Activated T-helper 1 cell treated with anti-CD3 and anti-CD28 coated beads, Interleukin-12 subunit alpha, Interleukin-12 subunit beta, Interleukin-2, Interleukin-4 antibody, amounts not matched to agents 30 ng/mL and 10 ng/mL and 1 ng/mL, durations not matched to agents 14 hours and 24 hours and 36 hours (primary cell): ENCODE measurements at regions of chr2 and their contacts with region 1.

Region 1: DNA sequence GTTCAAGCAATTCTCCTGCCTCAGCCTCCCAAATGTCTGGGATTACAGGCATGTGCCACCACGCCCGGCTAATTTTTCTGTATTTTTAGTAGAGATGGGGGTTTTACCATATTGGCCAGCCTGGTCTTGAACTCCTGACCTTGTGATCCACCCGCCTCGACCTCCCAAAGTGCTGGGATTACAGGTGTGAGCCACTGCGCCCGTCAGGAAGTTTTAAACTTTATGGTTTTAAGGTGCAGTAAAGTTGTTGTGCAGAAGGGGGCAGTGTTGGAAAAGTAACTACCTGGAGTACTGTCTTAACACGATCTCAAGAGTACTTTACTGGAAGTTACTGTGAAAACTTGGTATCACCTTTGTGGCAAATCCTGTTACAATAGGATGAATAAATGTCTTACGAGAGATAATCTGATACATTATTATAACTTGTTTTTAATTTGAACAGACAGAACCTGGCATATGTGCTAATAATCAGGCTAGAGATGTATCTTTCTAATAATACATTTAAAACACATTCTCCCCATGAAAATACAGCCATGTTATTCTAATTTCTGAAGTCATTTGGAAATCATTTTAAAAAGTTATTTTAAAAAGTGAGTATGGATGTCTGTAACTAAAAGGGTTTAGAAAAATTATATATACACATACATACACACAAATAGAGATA is 10.8 kb downstream of the SPDYA start:
- DNase-seq: peak; percentile 52
- H3K4me3 Mint-ChIP-seq: no peak overlapping the region
- H3K27ac Mint-ChIP-seq: no peak overlapping the region
- H3K4me1 Mint-ChIP-seq: no peaks in the 10 kb centered on the region
- H3K27me3 Mint-ChIP-seq: peaks cover 2% of the 10 kb centered on the region

Region 2: DNA sequence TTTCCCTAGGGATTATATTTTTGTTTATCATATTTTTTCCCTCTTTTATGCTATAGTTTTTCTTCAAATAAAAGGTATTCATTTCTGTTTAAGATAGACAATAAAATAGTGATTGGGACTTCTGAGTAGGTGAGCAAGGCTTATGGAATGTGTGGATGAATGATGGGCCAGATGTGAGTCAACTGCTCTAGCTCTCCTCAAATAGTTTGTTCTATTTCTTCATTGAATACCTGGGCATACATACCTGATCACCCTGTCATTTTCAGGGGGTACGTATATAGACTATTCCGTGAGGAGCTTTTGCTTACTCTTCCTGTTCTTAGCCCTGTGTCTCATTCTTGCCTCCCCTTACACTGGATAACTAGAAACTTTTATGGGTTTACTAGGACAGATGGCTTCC is 889.0 kb before region 1 on chr2:
- intact Hi-C with region 1: no loop called
- DNase-seq: no peak
- H3K4me3 Mint-ChIP-seq: no peak overlapping the region
- H3K27ac Mint-ChIP-seq: no peak overlapping the region
- H3K4me1 Mint-ChIP-seq: peaks cover 12% of the 10 kb centered on the region
- H3K27me3 Mint-ChIP-seq: no peaks in the 10 kb centered on the region

Region 3: DNA sequence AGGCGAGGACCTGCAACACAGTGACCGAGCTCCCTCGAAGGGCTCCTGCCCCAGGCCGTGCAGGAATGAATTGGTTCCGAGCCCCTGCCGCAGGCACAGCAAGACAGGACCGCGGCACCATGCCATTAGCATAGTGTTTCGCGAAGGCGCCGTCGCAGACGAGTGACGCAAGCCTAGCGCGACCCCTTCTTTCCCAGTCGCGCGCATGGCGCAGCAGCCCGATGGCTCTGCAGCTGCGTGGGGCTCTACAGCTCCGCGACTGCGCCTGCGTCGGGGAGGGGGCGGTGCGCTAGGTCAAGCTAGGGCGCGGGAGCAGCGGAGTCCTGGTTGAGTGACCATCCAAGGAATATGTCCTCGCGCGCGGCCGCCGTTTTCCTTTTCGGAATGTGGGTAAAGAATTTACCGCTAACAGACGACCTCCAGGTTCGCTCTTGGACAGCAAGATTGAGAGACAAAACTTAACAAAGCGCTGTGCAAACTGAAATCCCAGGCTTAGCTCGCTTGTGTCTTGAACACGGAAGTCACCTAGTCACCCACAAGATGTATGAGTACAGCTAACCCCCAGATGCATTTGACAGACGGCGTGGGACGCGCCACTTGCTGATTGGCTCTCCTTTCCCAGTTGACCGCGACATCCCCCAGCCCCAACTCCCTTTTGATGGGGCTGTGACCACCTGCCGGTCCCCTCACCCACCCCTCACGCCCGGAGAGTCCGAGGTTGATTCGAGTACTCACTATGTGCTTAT is 48.9 kb after region 1 on chr2 and contains the start of gene TRMT61B:
- intact Hi-C with region 1: loop called (anchors 1 kb)
- DNase-seq: peak; percentile 97
- H3K4me3 Mint-ChIP-seq: peak within 1 kb of the TSS; percentile 97
- H3K27ac Mint-ChIP-seq: peak within 1 kb of the TSS; percentile 93
- H3K4me1 Mint-ChIP-seq: peaks cover 23% of the 10 kb centered on the region
- H3K27me3 Mint-ChIP-seq: peaks cover 6% of the 10 kb centered on the region
- total RNA-seq, gene TRMT61B: 18.4 and 21.4 TPM in 2 replicates

Region 4: DNA sequence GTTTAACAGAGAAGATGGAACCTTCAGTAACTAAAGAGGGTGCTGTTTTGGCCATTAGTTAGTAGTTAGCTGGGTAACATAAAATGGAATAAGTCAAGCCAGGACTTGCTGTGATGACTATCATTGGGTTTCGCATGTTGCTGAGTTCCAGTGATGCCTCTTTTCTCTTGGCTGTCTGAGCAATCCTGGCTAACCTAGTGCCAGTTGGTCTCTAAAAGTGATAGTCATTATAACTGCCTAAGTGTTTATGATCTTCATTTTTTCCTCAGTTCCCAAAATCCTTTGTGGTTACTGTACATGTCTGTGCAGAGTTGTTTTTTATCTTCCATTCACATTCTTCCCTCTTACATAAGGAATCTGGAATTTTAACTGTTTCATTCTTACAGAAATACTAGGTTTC is 106.5 kb after region 1 on chr2:
- intact Hi-C with region 1: loop called (anchors 10 kb)
- DNase-seq: no peak
- H3K4me3 Mint-ChIP-seq: no peak overlapping the region
- H3K27ac Mint-ChIP-seq: no peak overlapping the region
- H3K4me1 Mint-ChIP-seq: peaks cover 17% of the 10 kb centered on the region
- H3K27me3 Mint-ChIP-seq: no peaks in the 10 kb centered on the region

Region 5: DNA sequence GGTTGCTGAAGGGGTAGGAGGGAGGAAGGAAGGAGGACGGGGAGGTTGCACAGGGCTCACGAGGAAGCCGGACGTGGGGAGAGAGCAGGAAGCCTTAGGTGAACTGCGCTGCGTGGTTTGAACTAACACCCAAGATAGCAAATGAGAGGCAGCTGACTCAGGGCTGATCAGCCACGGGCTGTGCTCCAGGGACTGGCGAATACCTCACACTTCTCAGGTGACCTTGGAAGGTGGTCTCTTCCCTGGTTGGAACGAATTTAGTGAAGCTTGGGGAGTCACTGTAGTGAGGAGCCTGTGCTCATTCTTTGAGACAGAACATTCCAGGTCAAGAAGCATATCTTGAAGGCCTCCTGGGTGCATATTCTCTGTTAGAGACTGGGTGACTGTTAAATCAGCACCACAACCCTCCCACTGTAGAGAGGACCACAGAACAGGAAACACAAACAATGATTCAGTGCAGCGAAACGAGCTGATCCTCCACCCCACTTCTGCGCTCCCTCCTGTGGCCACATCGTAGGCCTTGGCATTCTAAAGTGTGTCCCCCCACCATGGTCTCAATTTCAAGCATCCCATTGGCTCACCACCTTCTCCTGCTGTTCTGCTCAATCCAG is 193.5 kb after region 1 on chr2:
- intact Hi-C with region 1: loop called (anchors 5 kb)
- DNase-seq: peak; percentile 65
- H3K4me3 Mint-ChIP-seq: peak overlapping the region; percentile 88
- H3K27ac Mint-ChIP-seq: peak overlapping the region; percentile 99
- H3K4me1 Mint-ChIP-seq: peaks cover 65% of the 10 kb centered on the region
- H3K27me3 Mint-ChIP-seq: peaks cover 2% of the 10 kb centered on the region

Region 6: GRCh38 chr2:29309090-29310029 is 487.9 kb after region 1 on chr2:
- intact Hi-C with region 1: loop called (anchors 10 kb)
- DNase-seq: peak; percentile 41
- H3K4me3 Mint-ChIP-seq: no peak overlapping the region
- H3K27ac Mint-ChIP-seq: no peak overlapping the region
- H3K4me1 Mint-ChIP-seq: peaks cover 27% of the 10 kb centered on the region
- H3K27me3 Mint-ChIP-seq: peaks cover 32% of the 10 kb centered on the region